Lower leg skin (tissue), 4 donors: ENCODE measurements at regions of chr2 and their contacts with region 1.

Region 1: GRCh38 chr2:44955593-44956392 is 14.3 kb downstream of the SIX3 start:
- DNase-seq: peak; percentile 44 to 95
- H3K4me3 ChIP-seq: no peak overlapping the region
- CTCF ChIP-seq: no peak
- POLR2A ChIP-seq: no peak

Region 2: DNA sequence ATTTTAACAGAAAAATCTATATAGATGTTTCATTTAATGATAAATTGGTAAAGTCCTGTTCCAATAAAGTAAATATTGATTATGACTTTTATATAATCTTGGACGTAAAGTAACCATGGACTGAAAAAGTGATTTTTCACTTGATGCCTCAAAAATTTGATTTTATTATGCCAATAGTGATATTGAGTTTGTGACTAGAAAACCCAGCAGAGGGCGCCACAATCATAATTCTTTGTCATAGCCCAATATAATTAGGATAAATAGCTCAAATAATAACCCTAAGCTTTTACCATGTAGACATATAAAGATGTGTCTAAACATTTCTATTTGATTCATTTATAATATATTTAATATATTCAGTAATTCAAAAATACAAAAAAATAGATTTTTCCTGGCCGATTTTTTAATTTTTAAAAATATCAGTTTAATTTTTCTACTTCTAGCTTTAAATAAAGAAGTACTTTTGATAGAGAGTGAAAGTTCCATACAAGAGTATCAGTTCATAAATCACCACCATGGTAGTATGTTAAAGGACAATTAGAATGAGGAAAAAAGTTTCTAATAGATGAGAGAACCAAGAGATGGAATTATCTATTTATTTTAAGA is 563.4 kb before region 1 on chr2:
- intact Hi-C with region 1: loop called (anchors 10 kb)
- DNase-seq: peak in 1 of 2 donors; percentile 18
- H3K4me3 ChIP-seq: no peak overlapping the region
- CTCF ChIP-seq: no peak
- POLR2A ChIP-seq: no peak

Region 3: DNA sequence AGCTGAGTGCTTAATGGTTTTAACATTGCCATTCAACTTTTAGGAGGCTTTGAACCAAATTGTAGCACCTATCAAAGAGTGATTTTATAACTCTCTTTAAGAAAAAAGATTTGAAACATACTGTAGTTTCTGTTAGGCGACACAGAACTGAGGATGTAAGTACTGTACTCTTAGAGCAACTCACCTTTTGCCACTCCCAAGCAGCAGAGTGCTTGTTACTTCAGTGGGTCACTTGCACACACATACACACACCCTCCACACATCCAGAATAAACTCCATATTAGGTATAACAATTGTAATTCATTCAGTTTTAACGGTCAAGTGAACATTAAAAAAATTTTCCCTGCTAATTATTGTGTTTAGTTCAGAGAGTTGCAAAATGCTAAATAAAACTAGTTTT is 475.7 kb before region 1 on chr2:
- intact Hi-C with region 1: loop called (anchors 5 kb)
- DNase-seq: no peak
- H3K4me3 ChIP-seq: no peak overlapping the region
- CTCF ChIP-seq: no peak
- POLR2A ChIP-seq: no peak